HEK293T (cell line): ENCODE measurements at regions of chr11 and their contacts with region 1.

Region 1: DNA sequence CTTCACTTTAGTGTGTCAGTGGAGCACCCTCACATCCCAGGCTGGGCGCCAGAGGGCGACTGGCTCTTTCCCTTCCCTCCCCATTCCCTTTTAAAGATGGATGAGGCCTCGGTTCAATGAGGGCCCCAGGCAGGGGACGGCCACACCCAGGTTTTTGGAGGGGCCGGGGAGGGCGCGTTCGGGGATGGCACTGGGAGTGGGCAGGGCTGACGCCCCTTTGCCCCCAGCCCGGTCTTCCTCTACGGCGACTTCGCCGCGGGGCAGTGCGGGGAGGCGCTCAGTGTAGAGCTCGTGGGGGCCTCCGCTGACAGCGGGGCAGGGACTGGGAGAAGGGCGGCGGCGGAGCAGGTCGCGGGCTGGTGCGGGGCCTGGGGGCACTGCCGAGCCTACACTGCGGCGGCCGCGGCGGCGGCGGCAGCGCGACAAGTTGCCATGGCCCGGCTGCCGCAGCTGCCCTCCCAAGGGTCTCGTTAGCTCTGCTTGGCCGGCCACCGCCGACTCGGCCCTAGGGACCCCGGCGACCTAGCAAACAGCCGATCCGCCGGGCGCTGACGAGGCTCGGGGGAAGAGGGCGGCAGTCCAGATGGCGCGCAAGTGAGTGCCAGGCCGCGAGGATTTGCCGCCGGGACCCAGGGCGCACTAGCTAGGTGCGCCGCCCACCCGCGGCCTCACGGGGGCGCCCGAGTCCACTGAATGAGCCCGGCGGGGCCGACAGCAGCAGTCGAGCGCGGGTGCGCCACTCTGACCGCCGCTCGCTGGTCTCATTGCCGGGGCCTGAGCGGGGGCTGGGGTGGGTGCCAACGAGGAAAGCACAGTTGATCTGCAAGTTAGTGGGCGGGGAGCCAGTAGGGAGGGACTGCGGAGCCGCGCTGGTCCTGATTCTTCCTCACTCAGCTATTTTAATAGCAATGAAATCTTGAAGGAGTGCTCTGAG is 92.7 kb downstream of the RRM1 start:
- DNase-seq: peak; percentile 87

Region 2: GRCh38 chr11:4167758-4168157 is 19.6 kb before region 1 on chr11:
- CTCF ChIA-PET with region 1: no interaction called
- POLR2A ChIA-PET with region 1: no interaction called
- DNase-seq: no peak

Region 3: DNA sequence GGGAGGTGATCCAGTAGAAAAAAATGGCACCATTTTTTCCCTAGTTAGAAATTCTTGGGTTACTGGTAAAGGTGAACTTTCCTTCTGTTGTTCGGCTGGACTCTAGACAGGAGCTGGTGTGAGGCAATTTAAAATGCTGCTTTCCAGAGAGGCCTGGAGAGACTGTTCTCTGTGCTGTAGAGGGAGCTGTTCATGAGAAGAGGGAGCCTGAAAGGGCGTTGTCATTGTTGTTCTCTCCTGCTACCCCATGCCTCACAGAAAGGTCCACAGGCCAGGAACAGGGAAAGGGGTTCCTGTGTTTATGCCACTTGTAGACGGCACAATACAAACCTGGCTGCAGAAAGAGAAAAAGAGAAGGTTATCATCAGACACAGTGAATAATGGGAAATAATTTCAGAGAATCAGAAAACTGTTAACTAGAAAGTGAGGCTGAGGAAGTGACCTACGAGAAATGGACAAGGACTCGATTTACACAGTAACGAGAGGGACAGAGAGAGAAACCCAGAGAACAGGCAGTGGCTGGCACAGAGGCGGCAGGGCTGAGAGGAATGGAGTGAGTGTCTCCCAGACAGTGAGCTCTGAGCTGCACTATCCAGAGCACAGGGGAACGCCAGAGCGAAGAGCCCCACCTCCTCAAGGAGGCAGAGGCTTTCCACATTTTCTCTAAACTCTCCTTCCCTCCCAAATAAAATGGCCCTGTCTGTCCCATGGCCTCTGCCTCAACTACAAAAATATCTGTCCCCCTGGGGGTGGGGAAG is 16.5 kb after region 1 on chr11:
- CTCF ChIA-PET with region 1: interaction called, 16 read pairs
- POLR2A ChIA-PET with region 1: interaction called, 3 read pairs
- DNase-seq: no peak

Region 4: DNA sequence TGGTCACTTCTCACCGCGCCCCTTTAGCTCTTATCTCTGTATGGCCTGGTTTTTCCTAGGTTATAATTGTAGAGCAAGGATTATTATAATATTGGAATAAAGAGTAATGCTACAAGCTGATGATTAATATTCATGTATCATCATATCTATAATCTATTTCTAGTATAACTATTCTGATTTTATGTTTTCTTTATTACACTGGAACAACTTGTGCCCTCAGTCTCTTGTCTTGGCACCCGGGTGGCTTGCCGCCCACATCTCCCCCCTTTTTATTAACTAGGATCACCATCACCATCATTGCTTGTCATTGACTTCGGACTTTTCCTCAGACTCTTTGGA is 306.1 kb after region 1 on chr11:
- CTCF ChIA-PET with region 1: interaction called, 14 read pairs
- POLR2A ChIA-PET with region 1: interaction called, 6 read pairs
- DNase-seq: no peak

Region 5: DNA sequence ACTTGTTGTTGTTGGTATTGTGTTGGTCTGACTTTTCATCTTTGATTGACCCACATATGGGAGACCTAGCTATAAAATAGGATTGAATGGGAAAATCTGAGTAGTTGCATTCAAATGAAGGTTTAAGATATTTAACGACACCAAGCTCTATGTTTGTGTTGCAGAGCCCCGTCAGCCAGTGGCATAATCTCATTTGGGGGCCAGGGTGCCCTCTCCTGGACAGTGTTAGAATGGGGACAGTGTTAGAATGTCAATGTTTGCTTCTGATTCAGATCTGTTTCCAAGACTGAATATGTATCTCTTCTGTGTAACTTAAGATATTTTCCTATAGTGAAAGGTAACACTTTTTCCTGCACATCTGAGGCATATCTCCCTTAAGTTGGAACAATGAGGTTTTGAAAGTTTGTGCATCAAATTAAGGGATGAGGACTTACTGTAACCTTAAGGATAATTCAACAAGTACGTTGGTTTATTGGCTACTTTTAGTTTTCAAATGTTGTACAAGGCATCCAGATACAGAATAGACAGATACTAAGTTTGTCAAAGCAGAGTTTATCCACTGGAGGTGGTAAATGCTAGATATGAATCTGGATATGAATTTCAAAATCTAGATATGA is 352.4 kb after region 1 on chr11:
- CTCF ChIA-PET with region 1: interaction called, 37 read pairs
- POLR2A ChIA-PET with region 1: no interaction called
- DNase-seq: peak; percentile 57